ENCODE measurements at regions of chr5 and their contacts with region 1.

Region 1: GRCh38 chr5:97231025-97231636 is 48.1 kb upstream of the RIOK2 start:
- DNase-seq: no peak
- H3K4me3 ChIP-seq: no peak overlapping the region
- H3K27ac ChIP-seq: no peak overlapping the region
- H3K4me1 ChIP-seq: peaks cover 16% of the 10 kb centered on the region
- H3K27me3 ChIP-seq: no peaks in the 10 kb centered on the region
- CTCF ChIP-seq: peak; percentile 85

Region 2: DNA sequence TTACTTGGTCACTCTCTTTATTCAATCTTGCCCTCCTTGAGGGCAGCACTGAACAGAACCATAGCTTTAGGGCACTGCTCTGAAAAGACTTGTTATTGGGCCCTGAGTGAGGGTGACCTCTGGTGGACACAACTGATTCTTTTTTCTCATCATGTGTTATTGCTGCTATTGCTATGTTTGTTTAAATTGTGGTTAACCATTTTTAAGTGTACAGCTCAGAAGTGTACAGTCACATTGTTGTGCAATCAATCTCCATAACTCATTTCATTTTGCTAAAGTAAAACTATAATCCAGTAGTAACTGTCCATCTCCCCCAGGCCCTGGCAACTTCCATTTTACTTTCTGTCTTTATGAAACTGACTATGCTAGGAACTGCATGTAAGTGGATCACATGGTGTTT is 303.0 kb after region 1 on chr5:
- intact Hi-C with region 1: loop called (anchors 10 kb)
- DNase-seq: no peak
- H3K4me3 ChIP-seq: no peak overlapping the region
- H3K27ac ChIP-seq: no peak overlapping the region
- H3K4me1 ChIP-seq: no peaks in the 10 kb centered on the region
- H3K27me3 ChIP-seq: no peaks in the 10 kb centered on the region
- CTCF ChIP-seq: peak; percentile 67

Region 3: GRCh38 chr5:97820146-97820545 is 589.0 kb after region 1 on chr5:
- intact Hi-C with region 1: no loop called
- DNase-seq: no peak
- H3K4me3 ChIP-seq: no peak overlapping the region
- H3K27ac ChIP-seq: no peak overlapping the region
- H3K4me1 ChIP-seq: no peaks in the 10 kb centered on the region
- H3K27me3 ChIP-seq: no peaks in the 10 kb centered on the region
- CTCF ChIP-seq: no peak

Region 4: GRCh38 chr5:98827161-98827560 is 1596.0 kb after region 1 on chr5:
- intact Hi-C with region 1: loop called (anchors 10 kb)
- DNase-seq: no peak
- H3K4me3 ChIP-seq: no peak overlapping the region
- H3K27ac ChIP-seq: no peak overlapping the region
- H3K4me1 ChIP-seq: no peaks in the 10 kb centered on the region
- H3K27me3 ChIP-seq: no peaks in the 10 kb centered on the region
- CTCF ChIP-seq: peak; percentile 60

Measured in left ventricle myocardium inferior (tissue), 1 donor.